Caco-2 (cell line): ENCODE measurements at regions of chr4 and their contacts with region 1.

Region 1: DNA sequence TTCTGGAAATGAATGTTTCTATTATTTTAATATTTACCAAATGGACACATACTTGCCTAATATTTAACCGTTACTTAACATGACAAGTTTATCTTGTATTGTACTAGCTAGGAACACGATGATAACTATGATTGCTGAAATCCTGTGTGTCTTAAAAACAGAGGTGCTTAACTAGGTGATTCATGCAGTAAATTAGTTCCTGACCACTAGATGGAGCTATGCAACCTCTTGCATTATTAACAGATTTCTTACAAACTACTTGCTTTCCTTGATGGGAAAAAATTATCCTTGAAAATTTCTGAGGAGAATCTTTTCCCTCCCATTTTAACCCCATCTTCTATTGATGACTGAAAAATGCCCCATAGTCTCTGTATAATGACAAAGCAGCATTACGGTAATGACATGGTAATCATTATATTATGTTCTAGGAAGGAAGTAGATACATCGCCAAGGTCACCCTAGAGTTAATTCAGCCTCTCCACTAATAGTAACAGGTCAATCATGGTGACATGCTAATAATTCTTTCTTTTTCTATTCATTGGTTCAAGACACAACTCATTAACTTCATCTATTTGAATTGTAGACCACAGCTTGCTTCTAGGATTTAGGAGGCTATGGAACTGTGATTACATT is 844.2 kb downstream of the RAPGEF2 start:
- DNase-seq: peak in 1 of 2 experiments; percentile 43
- H3K4me3 ChIP-seq: no peak overlapping the region
- H3K4me3 Mint-ChIP-seq: no peak overlapping the region
- H3K27ac Mint-ChIP-seq: no peak overlapping the region
- H3K4me1 ChIP-seq: no peaks in the 10 kb centered on the region
- H3K4me1 Mint-ChIP-seq: no peaks in the 10 kb centered on the region
- H3K27me3 ChIP-seq: no peaks in the 10 kb centered on the region
- H3K27me3 Mint-ChIP-seq: no peaks in the 10 kb centered on the region
- CTCF ChIP-seq: peak; percentile 54 to 71

Region 2: GRCh38 chr4:159764343-159764952 is 182.7 kb before region 1 on chr4:
- CTCF ChIA-PET with region 1: no interaction called
- POLR2A ChIA-PET with region 1: no interaction called
- intact Hi-C with region 1: loop called (anchors 1 kb)
- DNase-seq: peak in 1 of 2 experiments; percentile 56
- H3K4me3 ChIP-seq: no peak overlapping the region
- H3K4me3 Mint-ChIP-seq: no peak overlapping the region
- H3K27ac Mint-ChIP-seq: no peak overlapping the region
- H3K4me1 ChIP-seq: no peaks in the 10 kb centered on the region
- H3K4me1 Mint-ChIP-seq: no peaks in the 10 kb centered on the region
- H3K27me3 ChIP-seq: no peaks in the 10 kb centered on the region
- H3K27me3 Mint-ChIP-seq: no peaks in the 10 kb centered on the region
- CTCF ChIP-seq: peak; percentile 24 to 50

Region 3: DNA sequence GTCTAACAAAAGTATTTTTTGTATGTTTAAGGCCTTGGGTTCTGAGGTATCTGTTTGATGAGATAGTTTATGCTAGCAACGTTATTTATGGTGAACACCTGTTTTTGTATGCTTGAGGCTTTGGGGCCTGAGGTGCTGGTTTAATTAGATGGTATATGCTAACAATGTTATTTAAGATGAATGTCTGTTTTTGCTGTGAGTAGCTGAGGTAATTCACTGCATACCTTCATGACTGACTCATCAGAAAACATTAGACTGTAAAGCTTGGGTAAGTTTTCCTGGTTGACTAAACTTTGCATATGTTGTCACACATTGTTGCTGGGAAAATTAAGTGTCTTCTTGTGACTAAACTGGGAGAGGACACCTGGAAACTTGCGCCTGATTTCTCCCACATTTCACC is 182.3 kb after region 1 on chr4:
- CTCF ChIA-PET with region 1: no interaction called
- POLR2A ChIA-PET with region 1: no interaction called
- intact Hi-C with region 1: loop called (anchors 1 kb)
- DNase-seq: no peak
- H3K4me3 ChIP-seq: no peak overlapping the region
- H3K4me3 Mint-ChIP-seq: no peak overlapping the region
- H3K27ac Mint-ChIP-seq: no peak overlapping the region
- H3K4me1 ChIP-seq: peaks cover 37% of the 10 kb centered on the region
- H3K4me1 Mint-ChIP-seq: peaks cover 7% of the 10 kb centered on the region
- H3K27me3 ChIP-seq: no peaks in the 10 kb centered on the region
- H3K27me3 Mint-ChIP-seq: no peaks in the 10 kb centered on the region
- CTCF ChIP-seq: no peak

Region 4: DNA sequence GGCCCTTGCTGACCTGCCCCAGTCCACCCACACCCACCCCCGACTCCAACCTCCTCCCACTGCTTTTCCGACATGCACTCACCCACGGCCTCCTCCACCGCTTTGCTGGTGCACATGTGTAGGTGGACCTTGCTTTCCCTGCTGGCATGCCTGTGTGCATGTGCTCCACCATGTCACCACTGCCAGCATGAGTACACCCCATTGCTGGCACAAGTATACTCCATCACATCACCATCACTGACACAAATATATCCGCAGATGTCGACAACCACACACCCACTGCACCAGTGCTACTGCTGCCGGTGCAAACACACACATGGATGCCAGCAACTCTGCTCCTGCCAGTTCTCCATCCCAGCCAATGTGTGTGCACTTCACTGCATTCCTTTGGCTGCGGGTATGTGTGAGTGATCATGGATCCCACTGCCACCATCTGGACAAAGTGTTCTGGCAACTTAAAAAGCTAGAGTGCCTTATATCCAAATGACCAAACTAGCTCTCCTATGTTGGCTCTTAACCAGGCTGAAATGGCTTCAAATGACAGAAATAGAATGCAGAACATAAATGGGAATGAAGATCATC is 228.1 kb after region 1 on chr4:
- CTCF ChIA-PET with region 1: interaction called, 3 read pairs
- POLR2A ChIA-PET with region 1: no interaction called
- intact Hi-C with region 1: loop called (anchors 1 kb)
- DNase-seq: peak in 1 of 2 experiments; percentile 21
- H3K4me3 ChIP-seq: no peak overlapping the region
- H3K4me3 Mint-ChIP-seq: no peak overlapping the region
- H3K27ac Mint-ChIP-seq: no peak overlapping the region
- H3K4me1 ChIP-seq: no peaks in the 10 kb centered on the region
- H3K4me1 Mint-ChIP-seq: no peaks in the 10 kb centered on the region
- H3K27me3 ChIP-seq: no peaks in the 10 kb centered on the region
- H3K27me3 Mint-ChIP-seq: no peaks in the 10 kb centered on the region
- CTCF ChIP-seq: peak; percentile 11 to 31

Region 5: GRCh38 chr4:160193787-160194186 is 246.7 kb after region 1 on chr4:
- CTCF ChIA-PET with region 1: no interaction called
- POLR2A ChIA-PET with region 1: no interaction called
- intact Hi-C with region 1: loop called (anchors 1 kb)
- DNase-seq: no peak
- H3K4me3 ChIP-seq: no peak overlapping the region
- H3K4me3 Mint-ChIP-seq: no peak overlapping the region
- H3K27ac Mint-ChIP-seq: no peak overlapping the region
- H3K4me1 ChIP-seq: no peaks in the 10 kb centered on the region
- H3K4me1 Mint-ChIP-seq: no peaks in the 10 kb centered on the region
- H3K27me3 ChIP-seq: no peaks in the 10 kb centered on the region
- H3K27me3 Mint-ChIP-seq: no peaks in the 10 kb centered on the region
- CTCF ChIP-seq: no peak

Region 6: DNA sequence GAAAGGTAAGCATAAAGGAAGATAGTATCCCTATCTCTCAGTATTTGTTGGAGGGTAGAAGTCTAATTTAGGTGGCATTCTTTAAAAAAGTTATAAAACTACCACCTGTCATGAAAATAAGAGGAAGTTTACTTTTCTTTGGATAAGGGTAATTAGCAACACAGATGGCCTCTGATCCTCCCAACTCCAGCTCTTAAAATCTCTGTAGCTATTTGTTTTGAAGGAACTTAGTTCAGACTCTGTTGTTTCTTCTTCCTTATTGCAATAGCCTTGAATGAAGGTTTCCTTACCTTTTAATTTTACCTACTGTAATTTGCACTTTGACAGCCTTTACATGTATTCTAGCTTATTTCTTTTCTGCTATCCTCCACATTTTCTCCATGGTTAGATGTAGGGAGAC is 417.1 kb after region 1 on chr4:
- CTCF ChIA-PET with region 1: no interaction called
- POLR2A ChIA-PET with region 1: no interaction called
- intact Hi-C with region 1: loop called (anchors 2 kb)
- DNase-seq: no peak
- H3K4me3 ChIP-seq: no peak overlapping the region
- H3K4me3 Mint-ChIP-seq: no peak overlapping the region
- H3K27ac Mint-ChIP-seq: no peak overlapping the region
- H3K4me1 ChIP-seq: no peaks in the 10 kb centered on the region
- H3K4me1 Mint-ChIP-seq: no peaks in the 10 kb centered on the region
- H3K27me3 ChIP-seq: no peaks in the 10 kb centered on the region
- H3K27me3 Mint-ChIP-seq: no peaks in the 10 kb centered on the region
- CTCF ChIP-seq: no peak